OCI-LY7 (cell line): ENCODE measurements at regions of chr22 and their contacts with region 1.

Region 1: DNA sequence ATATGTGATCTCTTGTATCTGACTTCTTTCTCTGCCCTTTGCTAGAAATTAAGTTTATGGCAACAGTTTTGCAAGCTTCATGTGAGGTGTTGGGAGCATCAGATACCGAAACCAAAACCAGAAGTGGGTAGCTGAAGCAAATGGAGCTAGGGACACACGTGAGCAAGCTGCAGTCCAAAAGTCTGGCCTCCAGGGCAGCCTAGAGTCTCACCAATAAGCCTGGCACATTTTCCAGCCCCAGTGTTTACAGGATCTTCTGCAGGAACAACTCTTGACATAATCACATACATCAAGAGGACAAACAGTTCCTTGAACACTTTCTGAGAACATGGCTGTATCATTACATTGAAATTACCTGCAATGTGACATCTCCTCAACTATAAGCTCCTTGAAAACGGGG is 114.1 kb downstream of the LARGE1 start:
- DNase-seq: peak; percentile 53
- H3K4me3 ChIP-seq: no peak overlapping the region
- H3K27ac ChIP-seq: no peak overlapping the region
- H3K4me1 ChIP-seq: peaks cover 8% of the 10 kb centered on the region
- CTCF ChIP-seq: no peak

Region 2: GRCh38 chr22:33823552-33823951 is 17.4 kb after region 1 on chr22:
- CTCF ChIA-PET with region 1: no interaction called
- POLR2A ChIA-PET with region 1: interaction called, 10 read pairs
- intact Hi-C with region 1: no loop called
- DNase-seq: no peak
- H3K4me3 ChIP-seq: no peak overlapping the region
- H3K27ac ChIP-seq: no peak overlapping the region
- H3K4me1 ChIP-seq: peaks cover 2% of the 10 kb centered on the region
- CTCF ChIP-seq: no peak